ENCODE measurements at regions of chr17 and their contacts with region 1.

Region 1: DNA sequence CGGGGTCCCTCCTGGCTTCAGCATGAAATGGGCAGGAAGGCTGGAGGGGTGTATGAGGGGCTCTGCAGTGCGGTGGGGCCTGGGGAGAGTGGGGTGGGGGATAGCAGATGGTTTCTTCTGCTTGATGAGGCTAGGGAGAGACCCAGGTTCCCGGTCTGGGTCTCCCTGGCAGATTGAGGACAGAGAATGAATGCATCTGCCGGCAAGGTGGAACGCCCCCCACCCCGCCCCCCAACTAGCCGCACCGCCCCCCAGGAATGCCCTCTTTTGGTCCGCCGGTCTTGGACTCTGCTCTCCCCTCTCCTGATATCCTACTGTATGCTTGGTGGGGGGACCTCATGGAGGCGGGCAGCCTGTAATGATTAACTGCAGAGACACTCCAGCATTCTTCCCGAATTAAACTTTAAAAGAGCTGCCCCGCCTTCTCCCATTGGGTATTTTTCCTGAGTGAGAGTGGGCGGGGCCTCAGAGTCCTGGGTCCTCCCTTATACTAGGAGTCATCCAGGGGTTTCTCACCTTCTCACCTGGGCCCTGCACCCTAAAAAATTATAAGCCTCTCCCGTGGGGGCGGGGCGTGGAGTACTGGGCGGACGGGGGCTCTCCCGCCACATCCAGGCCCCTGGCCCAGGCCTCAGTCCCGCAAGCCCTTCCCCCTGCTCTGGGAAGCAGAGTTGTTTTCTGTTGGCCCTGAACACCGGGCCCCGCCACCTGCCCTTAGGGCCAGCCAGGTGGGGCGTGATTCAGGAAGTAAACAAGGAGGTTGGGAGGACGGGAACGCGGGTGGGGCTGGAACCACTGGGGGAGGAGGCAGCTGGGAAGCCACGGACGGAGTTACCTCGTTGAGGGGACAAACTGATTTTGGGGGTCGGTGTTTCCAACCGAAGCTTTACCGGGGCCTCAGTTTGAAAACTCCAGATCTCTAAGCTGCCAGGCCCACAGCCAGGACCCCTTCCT is 1.5 kb downstream of the GRB7 start:
- DNase-seq: peak; percentile 71
- ATAC-seq: peak; percentile 12
- H3K4me3 Mint-ChIP-seq: peak overlapping the region; percentile 91
- H3K27ac Mint-ChIP-seq: peak overlapping the region; percentile 98
- H3K4me1 Mint-ChIP-seq: peaks cover 38% of the 10 kb centered on the region
- H3K27me3 Mint-ChIP-seq: no peaks in the 10 kb centered on the region; the same call in 1 of the 2 replicates
- CTCF ChIP-seq: no peak

Region 2: DNA sequence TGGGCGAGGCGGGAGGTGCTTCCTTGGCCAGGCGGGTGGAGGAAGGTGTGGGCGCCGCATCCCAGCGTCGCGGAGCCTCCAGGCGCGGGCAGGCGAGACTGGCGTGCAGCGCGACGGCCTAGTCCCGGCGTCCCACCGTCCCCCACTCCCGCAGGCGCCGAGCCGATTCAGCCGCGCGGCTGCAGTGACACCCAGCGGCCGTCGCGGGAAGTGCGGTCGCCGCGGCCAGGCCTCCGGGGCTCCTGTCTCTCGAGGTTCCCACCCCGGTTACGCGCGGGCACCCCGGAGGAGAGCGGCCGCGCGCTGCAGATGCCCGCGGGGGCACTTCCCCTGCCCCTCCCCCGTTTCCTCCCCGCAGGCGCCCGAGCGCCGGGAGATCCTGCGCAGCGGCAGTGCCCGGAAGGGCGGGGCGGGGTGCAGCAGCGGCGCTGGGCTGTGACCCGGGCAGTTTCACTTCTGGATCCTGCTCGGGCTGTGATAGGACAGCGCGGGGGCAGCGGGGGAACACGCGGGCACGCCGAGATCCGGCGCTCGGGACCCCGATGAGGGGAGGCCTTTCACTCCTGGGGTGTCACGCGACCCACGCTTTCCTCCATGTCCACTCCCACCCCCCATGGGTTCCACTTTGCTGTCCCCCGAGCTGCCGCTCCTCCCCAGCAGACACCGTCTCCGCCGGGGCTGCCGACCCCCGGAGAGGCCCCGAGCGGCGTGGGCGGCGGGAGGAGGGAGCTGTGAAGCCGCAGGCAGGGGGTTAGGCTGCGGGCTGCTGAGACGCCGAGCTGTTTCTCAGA is 15.1 kb after region 1 on chr17:
- CTCF ChIA-PET with region 1: interaction called, 8 read pairs
- POLR2A ChIA-PET with region 1: interaction called, 10 read pairs
- DNase-seq: peak; percentile 81
- ATAC-seq: peak; percentile 64
- H3K4me3 Mint-ChIP-seq: peak overlapping the region; percentile 42
- H3K27ac Mint-ChIP-seq: no peak overlapping the region
- H3K4me1 Mint-ChIP-seq: peaks cover 57% of the 10 kb centered on the region
- H3K27me3 Mint-ChIP-seq: peaks cover 19% of the 10 kb centered on the region
- CTCF ChIP-seq: peak; percentile 98

Measured in WTC11 (cell line).